Activated T-helper 2 cell treated with anti-CD3 and anti-CD28 coated beads, Interferon-gamma antibody, Interleukin-2, Interleukin-4, amounts not matched to agents 10 μg/mL and 5 μg/mL and 100 μg/mL, durations not matched to agents 14 hours and 24 hours and 36 hours (primary cell): ENCODE measurements at regions of chr2 and their contacts with region 1.

Region 1: GRCh38 chr2:208254871-208255556 is at the start of gene IDH1:
- DNase-seq: peak; percentile 87
- H3K4me3 Mint-ChIP-seq: peak within 1 kb of the TSS; percentile 94
- H3K27ac Mint-ChIP-seq: peak within 1 kb of the TSS; percentile 69
- H3K4me1 Mint-ChIP-seq: peaks cover 30% of the 10 kb centered on the region
- H3K27me3 Mint-ChIP-seq: no peaks in the 10 kb centered on the region
- total RNA-seq, gene IDH1: 42.7 and 46.1 TPM in 2 replicates

Region 2: GRCh38 chr2:206765242-206766056 is 1489.6 kb before region 1 on chr2 and contains the starts of genes FASTKD2 and MDH1B:
- intact Hi-C with region 1: loop called (anchors 10 kb)
- DNase-seq: peak; percentile 80
- H3K4me3 Mint-ChIP-seq: peak within 1 kb of the TSS; percentile 94
- H3K27ac Mint-ChIP-seq: peak within 1 kb of the TSS; percentile 97
- H3K4me1 Mint-ChIP-seq: peaks cover 29% of the 10 kb centered on the region
- H3K27me3 Mint-ChIP-seq: peaks cover 3% of the 10 kb centered on the region
- total RNA-seq, gene FASTKD2: 34.5 and 34.7 TPM in 2 replicates
- total RNA-seq, gene MDH1B: 0.25 and 0.55 TPM in 2 replicates

Region 3: DNA sequence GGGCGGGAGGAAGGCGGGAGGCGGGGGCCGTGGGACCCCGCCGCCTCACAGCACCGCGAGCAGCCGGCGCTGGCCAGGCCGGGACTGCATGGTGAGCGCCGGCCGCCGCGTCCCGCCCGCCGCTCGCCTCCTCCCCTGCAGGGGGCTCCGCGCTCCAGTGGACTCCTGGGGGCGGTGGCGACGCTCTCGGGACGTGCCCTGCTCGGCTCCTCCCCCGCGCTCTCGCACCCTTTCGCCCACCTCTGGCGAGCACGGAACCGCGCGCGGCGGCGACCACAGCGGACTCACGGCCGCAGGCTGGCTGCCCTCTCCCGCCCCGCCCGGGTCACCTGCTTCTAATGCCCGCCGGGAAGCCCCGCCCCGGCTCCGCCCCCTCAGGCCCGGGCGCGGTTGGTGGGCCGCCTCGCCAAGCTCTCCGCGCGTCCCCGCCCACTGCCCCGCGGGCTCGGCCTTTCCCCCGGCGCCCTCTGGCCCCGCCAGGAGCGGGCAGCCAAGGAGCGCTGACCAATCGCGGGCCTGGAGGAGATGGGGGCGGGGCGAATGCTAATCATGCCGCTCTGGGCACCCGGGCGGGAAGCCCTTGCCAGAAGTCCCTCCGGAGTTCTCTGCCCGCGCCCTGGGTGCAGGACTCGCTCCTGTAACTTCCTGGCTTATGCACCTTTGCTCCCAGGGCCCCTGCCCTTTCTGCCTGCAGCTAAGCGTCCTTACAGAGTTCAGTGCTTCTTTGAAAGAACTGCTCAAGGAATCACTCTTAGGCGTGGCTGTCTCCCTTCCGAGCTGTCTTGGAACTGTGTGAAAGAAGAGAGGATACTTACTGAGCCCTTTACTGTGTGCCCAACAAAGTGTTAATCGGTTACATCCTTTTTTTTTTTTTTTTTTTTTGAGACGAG is 485.2 kb before region 1 on chr2 and contains the start of gene FZD5:
- intact Hi-C with region 1: loop called (anchors 10 kb)
- DNase-seq: peak; percentile 76
- H3K4me3 Mint-ChIP-seq: peak within 1 kb of the TSS; percentile 83
- H3K27ac Mint-ChIP-seq: peak within 1 kb of the TSS; percentile 46
- H3K4me1 Mint-ChIP-seq: peaks cover 23% of the 10 kb centered on the region
- H3K27me3 Mint-ChIP-seq: peaks cover 58% of the 10 kb centered on the region
- total RNA-seq, gene FZD5: 1.7 TPM in 2 replicates

Region 4: GRCh38 chr2:208101716-208102631 is 153.0 kb before region 1 on chr2:
- intact Hi-C with region 1: loop called (anchors 2 kb)
- DNase-seq: no peak
- H3K4me3 Mint-ChIP-seq: no peak overlapping the region
- H3K27ac Mint-ChIP-seq: no peak overlapping the region
- H3K4me1 Mint-ChIP-seq: peaks cover 26% of the 10 kb centered on the region
- H3K27me3 Mint-ChIP-seq: peaks cover 6% of the 10 kb centered on the region

Region 5: GRCh38 chr2:208265801-208266552 is 11.0 kb after region 1 on chr2 and contains the start of gene PIKFYVE:
- intact Hi-C with region 1: loop called (anchors 1 kb)
- DNase-seq: peak; percentile 89
- H3K4me3 Mint-ChIP-seq: peak within 1 kb of the TSS; percentile 92
- H3K27ac Mint-ChIP-seq: peak within 1 kb of the TSS; percentile 95
- H3K4me1 Mint-ChIP-seq: peaks cover 45% of the 10 kb centered on the region
- H3K27me3 Mint-ChIP-seq: no peaks in the 10 kb centered on the region
- total RNA-seq, gene PIKFYVE: 30.3 and 34.1 TPM in 2 replicates